Right cardiac atrium (tissue), 5 donors: ENCODE measurements at regions of chr1 and their contacts with region 1.

Region 1: GRCh38 chr1:153922972-153923925 is at the start of gene GATAD2B:
- DNase-seq: peak; percentile 100
- ATAC-seq: peak; percentile 98
- H3K4me3 ChIP-seq: peak within 1 kb of the TSS; percentile 87
- H3K27ac ChIP-seq: peak within 1 kb of the TSS; percentile 82
- H3K4me1 ChIP-seq: peaks cover 11% of the 10 kb centered on the region
- H3K27me3 ChIP-seq: no peaks in the 10 kb centered on the region
- total RNA-seq, gene GATAD2B: 35.8 to 50.1 (median 42.6) TPM

Region 2: GRCh38 chr1:153827168-153827964 is 95.9 kb before region 1 on chr1:
- intact Hi-C with region 1: loop called in 3 of 4 experiments (anchors 5 to 10 kb)
- DNase-seq: no peak
- ATAC-seq: no peak
- H3K4me3 ChIP-seq: no peak overlapping the region
- H3K27ac ChIP-seq: no peak overlapping the region
- H3K4me1 ChIP-seq: no peaks in the 10 kb centered on the region
- H3K27me3 ChIP-seq: no peaks in the 10 kb centered on the region

Region 3: DNA sequence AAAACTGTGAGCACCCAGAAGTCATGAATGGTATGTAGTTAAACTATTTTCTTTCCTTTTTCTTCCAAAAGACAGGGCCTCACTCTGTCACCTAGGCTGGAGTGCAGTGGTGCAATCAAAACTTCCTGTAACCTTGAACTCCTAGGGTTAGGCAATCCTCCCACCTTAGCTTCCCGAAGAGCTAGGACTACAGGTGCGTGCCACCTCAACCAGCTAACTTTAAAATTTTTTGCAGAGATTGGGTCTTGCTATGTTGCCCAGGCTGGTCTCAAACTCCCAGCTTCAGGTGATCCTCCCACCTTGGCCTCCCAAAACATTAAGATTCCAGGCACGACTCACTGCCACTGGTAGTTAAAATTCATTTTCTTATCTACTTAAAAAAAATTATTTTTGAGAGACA is 63.0 kb before region 1 on chr1:
- intact Hi-C with region 1: no loop called
- DNase-seq: no peak
- ATAC-seq: no peak
- H3K4me3 ChIP-seq: no peak overlapping the region
- H3K27ac ChIP-seq: no peak overlapping the region
- H3K4me1 ChIP-seq: no peaks in the 10 kb centered on the region
- H3K27me3 ChIP-seq: no peaks in the 10 kb centered on the region